AG04449 (cell line): ENCODE measurements at regions of chr2 and their contacts with region 1.

Region 1: DNA sequence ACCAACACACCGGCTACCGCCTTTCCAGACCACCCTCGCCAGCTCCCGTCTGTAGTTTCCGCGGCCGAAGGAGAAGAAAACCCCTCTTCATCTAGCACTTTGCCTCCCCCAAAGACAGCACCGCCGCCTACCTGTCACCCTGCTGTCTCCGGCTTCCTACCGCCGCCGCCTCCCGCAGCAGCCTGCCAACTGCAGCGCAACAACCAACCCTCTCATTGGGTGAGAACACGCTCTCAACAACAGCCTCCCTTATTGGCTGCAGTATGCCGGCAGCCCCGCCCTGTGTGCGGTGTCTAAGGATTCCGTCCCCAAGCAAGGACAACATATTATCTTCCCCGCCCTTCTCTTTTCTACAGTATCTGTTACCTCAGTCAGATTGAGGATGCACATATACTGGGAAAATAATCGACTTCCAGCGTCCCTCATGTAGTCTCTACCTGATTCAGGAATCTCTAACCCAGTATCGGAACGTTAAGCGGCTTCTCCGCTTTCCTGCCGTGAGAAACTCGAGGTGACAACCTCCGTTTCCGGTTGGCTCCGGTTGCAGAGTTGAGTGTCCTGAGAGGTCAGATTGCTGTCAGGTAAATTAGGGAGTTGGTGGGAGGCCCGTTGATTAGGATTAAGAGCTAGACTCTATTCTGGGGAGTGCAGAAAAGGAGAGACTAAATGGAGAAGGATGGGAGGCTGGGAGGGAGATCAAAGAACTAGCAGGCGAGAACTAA is at the starts of genes HYCC2 and NDUFB3:
- DNase-seq: peak; percentile 59
- H3K4me3 ChIP-seq: peak within 1 kb of the TSS; percentile 99
- CTCF ChIP-seq: peak; percentile 42

Region 2: GRCh38 chr2:200901459-200902072 is 170.1 kb before region 1 on chr2:
- CTCF ChIA-PET with region 1: interaction called, 320 read pairs
- POLR2A ChIA-PET with region 1: interaction called, 6 read pairs
- DNase-seq: peak; percentile 66
- H3K4me3 ChIP-seq: no peak overlapping the region
- CTCF ChIP-seq: peak; percentile 67

Region 3: DNA sequence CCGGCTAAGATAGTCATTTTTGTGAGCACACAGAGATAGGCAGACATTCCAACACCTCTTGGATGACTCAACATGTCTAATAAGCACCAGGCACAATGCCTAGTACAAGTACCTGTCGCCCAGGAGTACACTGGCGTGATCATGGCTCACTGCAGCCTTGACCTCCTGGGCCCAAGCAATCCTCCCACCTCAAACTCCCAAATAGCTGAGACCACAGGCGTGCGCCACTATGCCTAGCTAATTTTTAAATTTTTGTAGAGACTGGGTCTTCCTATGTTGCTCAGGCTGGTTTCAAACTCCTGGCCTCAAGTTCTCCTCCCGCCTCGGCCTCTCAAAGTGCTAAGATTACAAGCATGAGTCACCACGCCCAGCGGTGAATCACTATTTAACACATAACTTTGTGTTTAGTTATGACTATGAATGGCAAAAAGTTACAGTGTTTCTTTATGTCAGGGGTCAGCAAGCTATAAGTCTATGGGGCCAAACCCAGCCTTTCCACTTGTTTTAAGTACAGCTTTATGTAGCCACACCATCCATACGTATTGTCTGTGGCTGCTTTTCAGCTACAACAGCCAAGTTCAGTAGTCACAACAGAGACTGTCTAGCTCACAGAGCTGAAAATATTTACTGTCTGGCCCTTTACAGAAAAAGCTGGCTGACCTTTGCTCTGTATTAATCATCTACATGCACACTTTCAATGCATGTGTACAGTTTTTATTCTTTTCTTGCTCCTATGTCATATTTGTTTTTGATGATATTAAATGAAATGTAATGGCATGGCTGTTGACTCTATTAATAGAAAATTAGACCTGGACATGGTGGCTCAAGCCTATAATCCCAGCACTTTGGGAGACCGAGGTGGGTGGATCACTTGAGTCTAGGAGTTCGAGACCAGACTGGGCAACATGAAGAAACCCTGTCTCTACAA is 126.9 kb before region 1 on chr2:
- CTCF ChIA-PET with region 1: interaction called, 11 read pairs
- POLR2A ChIA-PET with region 1: no interaction called
- DNase-seq: peak; percentile 72
- H3K4me3 ChIP-seq: no peak overlapping the region
- CTCF ChIP-seq: no peak

Region 4: DNA sequence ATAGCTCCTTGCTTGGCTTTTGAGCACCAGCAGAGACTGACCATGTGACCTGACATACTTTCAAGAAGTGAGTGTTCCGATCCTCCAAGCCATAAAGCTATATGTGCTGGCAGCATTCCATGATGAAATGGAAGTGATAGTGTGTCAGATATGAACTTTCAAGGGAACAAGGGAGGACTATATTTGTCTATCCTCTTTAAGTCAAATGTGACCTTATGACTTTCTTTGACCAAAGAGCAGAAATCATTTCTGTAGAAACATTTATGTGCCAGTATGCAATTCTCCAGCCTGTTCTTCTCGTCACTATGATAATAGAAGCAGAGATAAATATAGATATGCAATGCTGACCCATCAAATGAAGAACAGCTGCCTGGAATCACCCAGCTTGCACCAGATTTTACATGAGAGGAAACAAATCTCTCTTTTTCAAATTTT is 14.5 kb before region 1 on chr2:
- CTCF ChIA-PET with region 1: interaction called, 22 read pairs
- POLR2A ChIA-PET with region 1: interaction called, 4 read pairs
- DNase-seq: no peak
- H3K4me3 ChIP-seq: no peak overlapping the region
- CTCF ChIP-seq: no peak

Region 5: GRCh38 chr2:201158111-201158929 is 86.7 kb after region 1 on chr2:
- CTCF ChIA-PET with region 1: interaction called, 55 read pairs
- POLR2A ChIA-PET with region 1: no interaction called
- DNase-seq: no peak
- H3K4me3 ChIP-seq: no peak overlapping the region
- CTCF ChIP-seq: peak; percentile 57